Calu3 (cell line): ENCODE measurements at regions of chr7 and their contacts with region 1.

Region 1: DNA sequence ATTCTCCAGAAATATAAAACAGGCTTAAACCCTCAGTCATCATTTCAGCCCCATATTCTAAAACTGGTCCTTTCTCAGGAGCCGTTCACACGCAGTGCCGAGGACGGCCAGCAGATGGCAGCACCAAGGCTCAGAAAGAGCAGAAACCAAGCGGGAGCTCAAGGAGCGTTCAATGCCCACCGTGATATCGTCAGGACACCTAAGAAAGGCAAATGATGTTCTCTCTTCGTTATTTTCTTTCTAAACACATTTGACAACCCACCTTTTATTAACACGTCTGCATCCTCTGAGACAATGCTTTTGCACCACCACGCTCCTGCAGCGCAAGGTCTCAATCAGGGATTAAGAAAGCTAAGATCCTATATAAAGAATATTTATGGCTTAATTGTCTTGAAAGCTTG is 45.7 kb upstream of the RBM33 start:
- DNase-seq: peak; percentile 88
- H3K4me3 Mint-ChIP-seq: peak overlapping the region; percentile 28
- H3K27ac Mint-ChIP-seq: no peak overlapping the region
- H3K4me1 Mint-ChIP-seq: peaks cover 37% of the 10 kb centered on the region
- H3K27me3 Mint-ChIP-seq: no peaks in the 10 kb centered on the region
- CTCF ChIP-seq: peak; percentile 87

Region 2: DNA sequence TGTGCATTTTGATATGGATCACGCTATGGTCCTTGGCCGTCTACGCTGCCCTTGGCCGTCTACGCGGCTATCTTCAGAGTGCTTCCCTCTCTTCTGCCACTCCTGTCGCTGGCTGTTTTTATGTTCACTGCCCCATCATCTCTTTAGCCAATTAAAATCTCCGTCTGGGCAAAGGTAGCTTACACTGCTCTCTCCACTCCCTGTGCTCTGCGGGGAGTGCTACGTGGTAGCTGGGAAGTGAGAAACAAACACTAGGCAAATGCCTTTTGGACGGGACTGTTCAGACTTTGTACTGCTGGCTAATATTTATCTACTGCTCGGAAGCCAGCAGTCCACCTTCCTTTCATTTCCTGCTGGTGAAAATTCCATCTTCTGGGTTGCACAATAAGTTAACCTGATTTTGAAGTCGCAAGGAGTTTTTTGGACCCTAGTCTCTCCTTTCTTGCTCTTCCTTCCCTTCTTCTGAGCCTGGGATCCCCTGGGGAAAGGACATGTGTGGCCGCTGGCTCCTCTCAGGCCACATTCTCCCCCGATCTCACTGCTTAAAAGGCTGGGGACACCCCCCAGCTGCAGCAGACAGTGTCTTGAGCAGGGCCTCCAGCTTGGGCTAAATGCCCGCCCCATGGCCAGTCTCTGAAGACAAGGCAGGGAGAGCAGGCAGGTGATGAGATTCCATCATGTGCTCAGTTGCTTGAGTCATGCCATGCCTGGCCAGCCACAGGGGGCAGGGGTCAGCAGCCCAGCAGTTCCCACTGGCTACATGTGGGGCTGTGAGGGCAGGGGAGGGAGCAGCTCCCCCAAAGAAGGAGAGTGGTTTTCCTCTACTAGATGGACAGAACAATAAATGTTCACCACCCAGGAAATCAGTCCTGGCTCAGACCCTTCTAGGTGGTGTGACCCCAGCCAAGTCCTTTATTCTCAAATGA is 20.2 kb after region 1 on chr7:
- CTCF ChIA-PET with region 1: interaction called, 8 read pairs
- intact Hi-C with region 1: loop called (anchors 1 kb)
- DNase-seq: peak; percentile 90
- H3K4me3 Mint-ChIP-seq: peak overlapping the region; percentile 62
- H3K27ac Mint-ChIP-seq: peak overlapping the region; percentile 89
- H3K4me1 Mint-ChIP-seq: peaks cover 18% of the 10 kb centered on the region
- H3K27me3 Mint-ChIP-seq: no peaks in the 10 kb centered on the region
- CTCF ChIP-seq: no peak

Region 3: GRCh38 chr7:155644178-155644970 is 45.6 kb after region 1 on chr7 and contains the start of gene RBM33:
- CTCF ChIA-PET with region 1: no interaction called
- intact Hi-C with region 1: loop called (anchors 2 kb)
- DNase-seq: peak; percentile 79
- H3K4me3 Mint-ChIP-seq: peak within 1 kb of the TSS; percentile 83
- H3K27ac Mint-ChIP-seq: peak within 1 kb of the TSS; percentile 91
- H3K4me1 Mint-ChIP-seq: peaks cover 19% of the 10 kb centered on the region
- H3K27me3 Mint-ChIP-seq: no peaks in the 10 kb centered on the region
- CTCF ChIP-seq: no peak
- total RNA-seq, gene RBM33: 82.9 and 85.3 TPM in 2 replicates

Region 4: GRCh38 chr7:155702616-155703015 is 103.8 kb after region 1 on chr7:
- CTCF ChIA-PET with region 1: interaction called, 9 read pairs
- intact Hi-C with region 1: loop called (anchors 1 kb)
- DNase-seq: peak; percentile 23
- H3K4me3 Mint-ChIP-seq: no peak overlapping the region
- H3K27ac Mint-ChIP-seq: peak overlapping the region; percentile 66
- H3K4me1 Mint-ChIP-seq: peaks cover 25% of the 10 kb centered on the region
- H3K27me3 Mint-ChIP-seq: no peaks in the 10 kb centered on the region
- CTCF ChIP-seq: no peak

Region 5: DNA sequence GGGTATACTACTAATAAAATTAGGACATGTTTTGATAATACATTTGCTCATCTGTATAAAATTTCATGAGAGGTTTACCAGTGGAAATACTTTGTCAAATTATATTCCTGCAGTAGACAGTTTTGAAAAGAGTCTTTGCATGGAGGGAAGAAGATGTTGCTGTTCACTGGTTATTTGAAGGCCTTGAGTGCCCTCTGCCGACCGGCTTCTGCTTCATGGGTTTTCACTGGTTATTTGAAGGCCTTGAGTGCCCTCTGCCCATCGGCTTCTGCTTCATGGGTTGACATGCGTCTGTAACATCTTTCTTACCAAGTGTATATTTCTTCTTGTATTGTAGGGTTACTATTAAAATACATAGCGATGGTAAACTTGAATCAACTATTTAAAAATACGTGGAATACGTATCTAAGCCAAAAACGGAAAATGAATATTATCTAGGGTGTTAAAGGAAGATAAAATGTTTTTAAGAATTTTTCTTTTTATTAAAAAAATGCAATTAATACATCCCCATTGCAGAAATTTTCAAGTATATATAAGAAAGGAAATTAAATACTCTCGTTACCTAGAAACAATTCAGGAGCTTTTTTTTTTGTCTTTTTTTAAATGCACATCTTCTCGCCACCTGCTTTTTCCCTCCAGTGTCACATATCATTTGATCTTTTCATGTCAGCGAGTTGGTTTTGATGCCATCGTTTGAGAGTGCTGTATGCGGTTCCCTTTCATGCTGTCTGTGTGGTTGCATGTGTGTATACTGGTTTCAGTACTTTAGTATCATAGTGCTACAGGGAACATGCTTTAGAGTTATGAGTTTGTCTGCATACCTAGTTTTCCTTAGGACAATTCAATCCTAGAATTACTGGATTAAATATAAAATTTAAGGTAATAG is 140.1 kb after region 1 on chr7:
- CTCF ChIA-PET with region 1: no interaction called
- intact Hi-C with region 1: loop called (anchors 1 kb)
- DNase-seq: peak; percentile 77
- H3K4me3 Mint-ChIP-seq: no peak overlapping the region
- H3K27ac Mint-ChIP-seq: no peak overlapping the region
- H3K4me1 Mint-ChIP-seq: peaks cover 12% of the 10 kb centered on the region
- H3K27me3 Mint-ChIP-seq: no peaks in the 10 kb centered on the region
- CTCF ChIP-seq: peak; percentile 64

Region 6: GRCh38 chr7:155763691-155764437 is 165.1 kb after region 1 on chr7:
- CTCF ChIA-PET with region 1: no interaction called
- intact Hi-C with region 1: loop called (anchors 1 kb)
- DNase-seq: no peak
- H3K4me3 Mint-ChIP-seq: no peak overlapping the region
- H3K27ac Mint-ChIP-seq: no peak overlapping the region
- H3K4me1 Mint-ChIP-seq: no peaks in the 10 kb centered on the region
- H3K27me3 Mint-ChIP-seq: no peaks in the 10 kb centered on the region
- CTCF ChIP-seq: no peak

Region 7: GRCh38 chr7:156160811-156161210 is 562.0 kb after region 1 on chr7:
- CTCF ChIA-PET with region 1: no interaction called
- intact Hi-C with region 1: no loop called
- DNase-seq: peak; percentile 54
- H3K4me3 Mint-ChIP-seq: no peak overlapping the region
- H3K27ac Mint-ChIP-seq: no peak overlapping the region
- H3K4me1 Mint-ChIP-seq: peaks cover 13% of the 10 kb centered on the region
- H3K27me3 Mint-ChIP-seq: peaks cover 38% of the 10 kb centered on the region
- CTCF ChIP-seq: no peak